Sciatic nerve (tissue), 2 donors: ENCODE measurements at regions of chr17 and their contacts with region 1.

Region 1: DNA sequence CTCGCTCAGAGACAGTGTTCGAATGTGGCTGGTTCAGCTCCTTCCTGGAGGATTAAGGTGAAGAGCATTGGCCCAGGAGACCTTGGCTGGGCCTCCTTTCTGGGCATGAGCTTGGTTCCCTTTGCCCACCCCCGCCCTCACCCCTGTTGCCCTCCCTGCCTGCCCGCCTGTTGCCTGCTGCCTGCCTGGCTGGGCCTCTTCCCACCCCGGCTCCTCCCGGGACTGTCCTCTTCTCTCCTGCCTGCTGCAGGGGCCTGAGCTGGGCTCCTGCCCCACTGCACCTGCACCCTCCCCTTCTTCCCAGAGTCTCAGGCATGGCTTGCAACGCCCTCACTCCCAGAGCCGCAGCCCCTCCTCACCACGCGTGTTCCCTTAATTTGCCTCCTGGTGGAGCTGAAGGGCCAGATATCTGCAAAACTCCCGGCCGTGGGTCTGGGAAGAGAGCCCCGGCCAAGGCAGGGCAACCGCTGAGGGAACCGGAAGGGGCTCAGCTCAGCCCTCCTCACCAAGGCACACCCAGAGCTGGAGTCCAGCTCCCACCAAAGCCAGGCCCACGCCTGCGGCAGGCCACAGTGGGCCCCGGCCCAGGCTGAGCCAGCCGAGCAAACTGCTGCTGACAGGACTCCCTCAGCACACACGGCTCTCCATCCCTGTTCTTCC is 31.2 kb downstream of the MNT start:
- DNase-seq: no peak
- ATAC-seq: peak; percentile 19

Region 2: GRCh38 chr17:752002-752619 is 1617.6 kb before region 1 on chr17 and contains the start of gene GEMIN4:
- intact Hi-C with region 1: no loop called
- DNase-seq: peak; percentile 97
- ATAC-seq: peak; percentile 93
- total RNA-seq, gene GEMIN4: 18.1 TPM

Region 3: DNA sequence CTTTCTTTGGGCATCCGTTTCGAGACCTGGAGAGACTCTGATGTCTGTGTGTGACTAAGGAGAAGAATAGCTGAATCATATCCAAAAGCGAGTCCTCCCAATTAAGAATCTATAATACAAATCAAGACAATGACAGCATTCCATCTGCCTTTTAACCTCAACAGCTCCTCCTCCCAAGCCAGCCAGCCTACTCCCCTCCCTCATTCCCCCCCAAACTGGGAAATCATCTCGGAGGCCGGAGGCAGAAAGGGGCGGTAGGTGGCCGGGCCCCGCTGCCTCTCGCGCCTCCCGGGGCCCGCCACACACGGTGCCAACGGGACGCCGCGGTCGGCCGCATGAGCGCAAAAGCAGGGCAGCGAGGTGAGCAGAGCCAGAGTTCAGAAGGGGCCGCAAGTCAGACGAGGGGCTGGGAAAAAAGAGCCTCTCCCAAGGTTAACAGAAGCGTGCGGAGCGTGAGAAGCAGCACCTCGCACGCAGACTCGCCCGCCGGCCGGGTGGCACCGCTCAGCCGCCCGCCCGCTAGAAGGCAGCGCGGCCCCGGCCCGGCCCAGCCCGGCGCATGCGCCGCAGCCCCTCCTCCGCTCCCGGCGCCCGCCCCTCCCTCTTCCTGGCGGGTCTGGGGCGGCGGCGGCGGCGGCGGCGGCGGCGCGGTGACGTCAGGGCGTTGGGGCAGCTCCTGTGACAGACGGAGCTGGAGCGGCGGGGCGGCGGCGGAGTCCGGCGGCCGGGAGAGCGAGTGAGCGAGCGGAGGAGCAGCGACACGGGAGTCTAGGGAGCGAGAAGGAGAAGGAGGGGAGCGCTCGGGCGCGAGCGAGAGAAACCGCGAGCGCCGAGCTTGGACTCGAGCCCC is 223.5 kb after region 1 on chr17 and contains the start of gene PAFAH1B1:
- intact Hi-C with region 1: loop called (anchors 5 kb)
- DNase-seq: peak; percentile 94
- ATAC-seq: peak; percentile 95
- total RNA-seq, gene PAFAH1B1: 160 TPM